Uterus (tissue), 4 donors: ENCODE measurements at regions of chr5 and their contacts with region 1.

Region 1: DNA sequence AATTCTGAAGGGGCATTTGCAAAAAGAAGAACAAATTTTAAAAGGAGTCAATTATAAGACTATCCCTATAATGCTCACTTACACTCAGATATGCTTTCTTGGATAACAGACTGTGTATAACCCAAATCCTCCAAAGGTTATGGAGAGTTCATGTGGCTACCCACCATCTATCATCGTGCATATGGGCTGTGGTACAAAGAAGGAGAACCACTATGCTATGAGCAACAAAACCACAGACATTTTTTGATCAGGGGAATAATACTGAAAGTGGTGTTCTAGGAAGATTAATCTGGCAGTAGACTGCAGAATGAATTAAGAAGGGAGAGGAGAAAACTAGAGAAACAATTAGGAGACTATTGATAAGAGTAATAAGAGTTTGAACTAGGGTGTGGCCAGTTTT is 16.8 kb downstream of the NR3C1 start:
- DNase-seq: no peak
- H3K4me3 ChIP-seq: no peak overlapping the region
- H3K27ac ChIP-seq: no peak overlapping the region
- H3K4me1 ChIP-seq: no peaks in the 10 kb centered on the region
- H3K27me3 ChIP-seq: no peaks in the 10 kb centered on the region
- CTCF ChIP-seq: no peak
- POLR2A ChIP-seq: no peak

Region 2: DNA sequence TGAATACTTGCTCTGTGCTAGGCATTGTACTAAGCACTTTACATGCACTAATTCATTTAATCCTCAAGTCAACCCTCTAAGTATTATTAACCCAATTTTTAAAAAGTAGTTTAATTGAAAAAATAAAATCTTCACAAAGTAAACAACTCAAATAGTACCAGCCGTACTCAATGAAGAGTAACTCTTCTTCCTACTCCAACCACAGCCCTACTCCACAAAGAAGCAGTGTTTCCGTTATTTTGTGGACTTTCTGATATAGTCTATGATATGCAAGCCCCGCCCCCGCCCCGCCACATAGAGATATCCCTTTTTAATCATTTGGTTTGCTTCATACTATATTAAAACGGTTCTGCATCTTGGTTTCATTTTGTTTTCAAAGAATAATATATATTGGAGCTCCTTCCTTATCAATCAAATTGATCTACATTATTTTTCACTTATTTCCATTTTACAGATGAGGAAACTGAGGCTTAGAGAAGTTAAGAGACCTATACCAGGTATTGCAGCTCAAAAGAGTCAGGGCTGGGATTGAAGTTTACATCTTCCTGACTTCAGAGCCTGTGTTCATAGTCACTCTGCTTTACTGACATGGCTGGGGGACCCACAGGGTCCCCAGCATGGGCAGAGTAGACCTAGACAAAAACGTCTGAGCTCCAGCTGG is 1587.1 kb before region 1 on chr5:
- intact Hi-C with region 1: loop called (anchors 10 kb)
- DNase-seq: no peak
- H3K4me3 ChIP-seq: no peak overlapping the region
- H3K27ac ChIP-seq: no peak overlapping the region
- H3K4me1 ChIP-seq: no peaks in the 10 kb centered on the region
- H3K27me3 ChIP-seq: no peaks in the 10 kb centered on the region
- CTCF ChIP-seq: no peak
- POLR2A ChIP-seq: no peak

Region 3: GRCh38 chr5:142938266-142938880 is 448.4 kb before region 1 on chr5:
- intact Hi-C with region 1: no loop called
- DNase-seq: no peak
- H3K4me3 ChIP-seq: no peak overlapping the region
- H3K27ac ChIP-seq: no peak overlapping the region
- H3K4me1 ChIP-seq: no peaks in the 10 kb centered on the region
- H3K27me3 ChIP-seq: no peaks in the 10 kb centered on the region
- CTCF ChIP-seq: no peak
- POLR2A ChIP-seq: no peak